Right lobe of liver (tissue), 6 donors: ENCODE measurements at regions of chr1 and their contacts with region 1.

Region 1: GRCh38 chr1:17119773-17120480 is 676 bp upstream of the PADI2 start:
- DNase-seq: peak in 1 of 3 donors; percentile 43
- ATAC-seq: peak in 3 of 4 donors; percentile 6 to 17 (median 14)
- H3K4me3 ChIP-seq: peak overlapping the region in 2 of 3 donors; percentile 4 to 21
- H3K27ac ChIP-seq: no peak overlapping the region
- H3K4me1 ChIP-seq: no peaks in the 10 kb centered on the region
- H3K27me3 ChIP-seq: peaks cover 0 to 9% of the 10 kb centered on the region in 2 donors
- CTCF ChIP-seq: no peak
- POLR2A ChIP-seq: no peak

Region 2: DNA sequence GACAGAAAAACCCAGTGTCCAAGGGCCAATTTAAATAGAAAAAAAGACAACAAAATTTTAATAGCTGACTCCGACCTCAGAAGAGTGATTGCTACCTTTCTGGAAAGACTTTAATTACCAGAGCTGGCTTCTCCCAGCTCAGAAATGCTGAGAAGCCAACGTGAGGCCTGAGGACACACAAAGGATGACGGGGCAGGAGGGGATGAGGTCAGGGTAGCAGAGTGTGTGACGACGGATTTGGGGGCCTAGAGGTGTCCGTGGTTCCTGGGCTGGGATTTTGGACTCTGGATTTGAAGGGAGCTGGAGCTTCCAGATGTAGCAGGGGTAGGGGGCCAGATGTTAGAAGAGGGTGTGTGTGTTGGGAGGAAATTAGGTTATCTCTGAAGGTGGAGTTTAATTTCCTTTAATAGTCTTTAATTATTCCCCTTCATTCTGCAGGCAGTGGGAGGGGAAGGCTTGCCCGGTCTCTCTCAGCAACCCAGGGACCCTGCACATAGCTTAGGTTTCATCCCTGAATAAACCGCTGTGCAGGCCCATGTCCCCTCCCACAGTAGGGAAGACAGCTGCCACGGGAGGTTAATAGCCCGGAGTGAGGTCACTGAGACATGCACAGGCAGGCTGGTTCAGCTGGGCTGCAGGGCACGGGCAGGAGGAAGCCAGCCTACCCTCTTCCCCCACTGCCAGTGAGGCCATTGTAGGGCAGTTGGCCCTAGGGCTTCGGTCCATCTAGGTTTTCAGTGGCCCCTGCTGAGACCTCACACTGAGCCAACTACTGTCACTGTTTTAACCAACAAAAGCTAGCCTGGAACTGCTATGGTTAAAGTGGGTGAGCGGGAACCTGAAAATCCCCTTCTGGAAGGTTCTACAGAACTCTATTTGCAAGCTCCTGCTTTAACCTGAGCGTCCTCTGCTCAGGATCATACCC is 125.2 kb after region 1 on chr1:
- intact Hi-C with region 1: loop called in 1 of 2 experiments (anchors 5 kb)
- DNase-seq: peak in 1 of 3 donors; percentile 43
- ATAC-seq: peak in 2 of 4 donors; percentile 23 to 86
- H3K4me3 ChIP-seq: no peak overlapping the region
- H3K27ac ChIP-seq: no peak overlapping the region
- H3K4me1 ChIP-seq: no peaks in the 10 kb centered on the region
- H3K27me3 ChIP-seq: no peaks in the 10 kb centered on the region
- CTCF ChIP-seq: no peak
- POLR2A ChIP-seq: no peak